GM18951 (cell line): ENCODE measurements at regions of chrX and their contacts with region 1.

Region 1: DNA sequence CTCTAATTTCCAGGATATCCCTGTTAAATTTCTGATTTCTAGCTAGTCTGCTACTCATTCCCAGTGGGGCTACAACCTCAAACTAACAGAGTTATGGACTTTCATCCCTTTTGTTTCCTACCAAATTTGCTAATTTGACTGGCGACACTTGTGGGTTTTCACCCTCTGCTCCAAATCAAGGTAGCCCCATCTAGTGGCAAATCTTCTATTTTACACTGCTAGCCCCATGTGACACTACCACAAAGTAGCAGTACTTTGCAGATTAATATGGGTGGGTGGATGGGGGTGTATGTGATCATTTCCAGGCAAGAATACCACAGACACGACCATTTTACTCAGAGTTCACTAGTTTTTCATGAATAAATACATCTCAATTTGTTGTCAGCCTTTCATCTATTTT is 150.3 kb downstream of the MSL3 start:
- POLR2A ChIP-seq: no peak

Region 2: GRCh38 chrX:10327651-10328050 is 1580.7 kb before region 1 on chrX:
- in situ Hi-C with region 1: no loop called
- POLR2A ChIP-seq: no peak

Region 3: GRCh38 chrX:11533211-11533651 is 375.1 kb before region 1 on chrX:
- in situ Hi-C with region 1: loop called (anchors 25 kb)
- POLR2A ChIP-seq: no peak

Region 4: DNA sequence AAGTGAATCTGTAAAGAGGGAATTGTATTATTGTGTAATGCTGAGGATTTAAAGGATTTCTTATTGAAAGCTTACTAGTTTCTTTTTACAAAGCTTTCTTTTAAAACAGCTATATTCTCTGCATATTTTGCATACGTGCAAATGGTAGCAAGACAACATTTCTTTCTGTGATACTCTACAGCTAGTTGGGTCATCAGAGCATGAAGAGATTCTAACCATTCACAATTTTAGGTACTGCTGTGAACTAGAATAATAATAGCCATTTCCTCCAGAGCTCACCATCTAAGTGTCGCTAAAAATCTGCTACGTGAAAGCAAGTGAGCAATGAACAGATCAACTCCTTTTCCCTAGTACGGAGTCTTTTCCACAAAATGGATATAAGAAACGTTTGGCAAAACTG is 280.0 kb before region 1 on chrX:
- in situ Hi-C with region 1: no loop called
- POLR2A ChIP-seq: no peak

Region 5: GRCh38 chrX:11787564-11787963 is 120.8 kb before region 1 on chrX:
- in situ Hi-C with region 1: loop called (anchors 10 kb)
- POLR2A ChIP-seq: no peak

Region 6: DNA sequence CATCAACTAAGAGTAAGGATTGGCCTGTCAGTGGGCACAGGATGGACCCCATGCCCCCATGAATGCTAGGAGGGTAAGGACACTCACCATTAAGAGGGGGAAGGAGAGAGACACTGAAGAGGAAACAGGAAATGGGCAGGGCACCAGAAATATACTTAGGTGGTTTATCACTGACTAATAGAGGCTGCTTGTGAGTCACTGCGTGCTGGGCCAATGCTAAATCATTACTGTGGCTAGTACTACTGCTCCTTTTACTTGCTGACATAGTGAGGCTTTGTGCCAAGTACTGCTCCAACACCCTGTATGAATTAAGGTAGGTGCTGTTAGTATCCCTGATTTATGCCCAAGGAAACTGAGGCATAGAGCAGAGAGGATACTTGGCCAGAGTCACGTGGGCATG is 99.5 kb after region 1 on chrX:
- in situ Hi-C with region 1: no loop called
- POLR2A ChIP-seq: no peak